Activated CD8-positive, alpha-beta T cell treated with anti-CD3 and anti-CD28 coated beads for 36 hours (primary cell): ENCODE measurements at regions of chr1 and their contacts with region 1.

Region 1: GRCh38 chr1:67332653-67333529 is 25.2 kb downstream of the IL12RB2 start:
- DNase-seq: peak; percentile 64
- ATAC-seq: peak; percentile 86
- H3K4me3 Mint-ChIP-seq: peak overlapping the region; percentile 28
- H3K27ac Mint-ChIP-seq: peak overlapping the region; percentile 95
- H3K4me1 Mint-ChIP-seq: peaks cover 72% of the 10 kb centered on the region
- H3K27me3 Mint-ChIP-seq: no peaks in the 10 kb centered on the region
- CTCF ChIP-seq: no peak

Region 2: DNA sequence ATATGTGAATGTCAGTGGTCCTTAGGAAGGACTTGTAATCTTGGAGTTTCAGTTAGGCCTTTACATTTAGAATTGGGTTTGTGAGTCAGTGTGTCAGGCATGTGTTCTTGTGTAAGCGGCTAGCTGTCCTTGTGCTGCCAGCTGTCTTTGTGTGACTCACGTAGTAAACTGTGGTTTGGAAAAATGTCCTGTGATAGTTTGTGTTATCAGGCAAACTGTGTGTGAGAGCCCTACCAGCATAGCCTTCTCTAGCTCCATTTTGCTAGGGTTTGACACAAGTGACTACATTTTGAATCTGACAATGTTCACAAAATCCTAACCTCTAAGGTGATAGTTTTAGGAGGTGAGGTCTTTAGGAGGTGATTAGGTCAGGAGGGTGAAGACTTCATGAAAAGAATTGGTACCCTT is 272.1 kb before region 1 on chr1:
- CTCF ChIA-PET with region 1: no interaction called
- POLR2A ChIA-PET with region 1: no interaction called
- intact Hi-C with region 1: no loop called
- DNase-seq: no peak
- ATAC-seq: no peak
- H3K4me3 Mint-ChIP-seq: no peak overlapping the region
- H3K27ac Mint-ChIP-seq: no peak overlapping the region
- H3K4me1 Mint-ChIP-seq: no peaks in the 10 kb centered on the region
- H3K27me3 Mint-ChIP-seq: peaks cover 8% of the 10 kb centered on the region
- CTCF ChIP-seq: no peak

Region 3: DNA sequence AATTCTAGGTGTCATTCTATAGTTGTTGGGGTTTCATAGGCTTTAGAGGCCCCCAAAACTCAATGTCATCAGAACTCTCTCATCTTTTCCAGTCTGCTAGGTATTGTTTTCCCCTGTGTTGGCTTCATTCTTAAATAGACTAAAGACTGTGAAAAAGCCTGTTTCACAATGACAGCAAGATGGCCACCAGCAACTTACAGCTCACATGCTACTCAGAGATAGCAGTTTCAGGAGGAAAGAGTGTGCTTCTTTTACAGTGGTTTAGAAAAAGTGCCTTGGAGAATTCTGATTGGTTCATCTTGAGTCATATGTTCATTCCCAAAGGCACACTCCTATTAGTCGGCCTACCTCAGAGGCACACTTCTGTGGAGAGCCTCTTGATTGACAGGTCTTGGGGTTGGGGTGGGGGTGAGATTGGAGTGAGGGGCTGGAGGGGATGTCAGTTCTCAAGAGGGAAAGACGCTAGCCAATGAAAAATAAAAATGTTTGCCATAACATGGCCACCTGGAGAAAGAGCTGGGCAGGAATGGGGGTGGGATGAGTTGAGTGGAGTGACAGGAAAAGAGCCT is 158.1 kb before region 1 on chr1:
- CTCF ChIA-PET with region 1: interaction called, 3 read pairs
- POLR2A ChIA-PET with region 1: interaction called, 3 read pairs
- intact Hi-C with region 1: loop called (anchors 2 kb)
- DNase-seq: peak; percentile 54
- ATAC-seq: peak; percentile 66
- H3K4me3 Mint-ChIP-seq: no peak overlapping the region
- H3K27ac Mint-ChIP-seq: peak overlapping the region; percentile 77
- H3K4me1 Mint-ChIP-seq: peaks cover 56% of the 10 kb centered on the region
- H3K27me3 Mint-ChIP-seq: peaks cover under 1% of the 10 kb centered on the region
- CTCF ChIP-seq: no peak

Region 4: GRCh38 chr1:67274623-67275325 is 58.1 kb before region 1 on chr1:
- CTCF ChIA-PET with region 1: interaction called, 4 read pairs
- POLR2A ChIA-PET with region 1: interaction called, 29 read pairs
- intact Hi-C with region 1: loop called (anchors 2 kb)
- DNase-seq: peak; percentile 47
- ATAC-seq: peak; percentile 91
- H3K4me3 Mint-ChIP-seq: no peak overlapping the region
- H3K27ac Mint-ChIP-seq: peak overlapping the region; percentile 79
- H3K4me1 Mint-ChIP-seq: peaks cover 41% of the 10 kb centered on the region
- H3K27me3 Mint-ChIP-seq: peaks cover 3% of the 10 kb centered on the region
- CTCF ChIP-seq: no peak

Region 5: GRCh38 chr1:67285780-67286488 is 47.0 kb before region 1 on chr1:
- CTCF ChIA-PET with region 1: interaction called, 4 read pairs
- POLR2A ChIA-PET with region 1: interaction called, 6 read pairs
- intact Hi-C with region 1: loop called (anchors 5 kb)
- DNase-seq: peak; percentile 57
- ATAC-seq: peak; percentile 96
- H3K4me3 Mint-ChIP-seq: no peak overlapping the region
- H3K27ac Mint-ChIP-seq: peak overlapping the region; percentile 88
- H3K4me1 Mint-ChIP-seq: peaks cover 37% of the 10 kb centered on the region
- H3K27me3 Mint-ChIP-seq: peaks cover 4% of the 10 kb centered on the region
- CTCF ChIP-seq: no peak

Region 6: DNA sequence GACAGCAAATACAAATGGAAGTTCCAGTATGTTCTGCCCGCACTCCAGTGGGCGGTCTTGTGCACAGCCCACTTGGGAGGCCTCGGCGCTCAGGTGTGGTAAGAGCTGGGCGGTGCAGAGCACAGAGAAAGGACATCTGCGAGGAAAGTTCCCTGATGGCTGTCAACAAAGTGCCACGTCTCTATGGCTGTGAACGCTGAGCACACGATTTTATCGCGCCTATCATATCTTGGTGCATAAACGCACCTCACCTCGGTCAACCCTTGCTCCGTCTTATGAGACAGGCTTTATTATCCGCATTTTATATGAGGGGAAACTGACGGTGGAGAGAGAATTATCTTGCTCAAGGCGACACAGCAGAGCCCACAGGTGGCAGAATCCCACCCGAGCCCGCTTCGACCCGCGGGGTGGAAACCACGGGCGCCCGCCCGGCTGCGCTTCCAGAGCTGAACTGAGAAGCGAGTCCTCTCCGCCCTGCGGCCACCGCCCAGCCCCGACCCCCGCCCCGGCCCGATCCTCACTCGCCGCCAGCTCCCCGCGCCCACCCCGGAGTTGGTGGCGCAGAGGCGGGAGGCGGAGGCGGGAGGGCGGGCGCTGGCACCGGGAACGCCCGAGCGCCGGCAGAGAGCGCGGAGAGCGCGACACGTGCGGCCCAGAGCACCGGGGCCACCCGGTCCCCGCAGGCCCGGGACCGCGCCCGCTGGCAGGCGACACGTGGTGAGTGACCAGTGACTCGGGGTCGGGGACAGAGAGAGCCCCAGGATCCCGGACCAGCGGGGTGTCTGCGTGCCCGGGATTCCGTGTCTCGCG is 25.4 kb before region 1 on chr1 and contains the start of gene IL12RB2:
- CTCF ChIA-PET with region 1: no interaction called
- POLR2A ChIA-PET with region 1: interaction called, 5 read pairs
- intact Hi-C with region 1: loop called (anchors 1 kb)
- DNase-seq: peak; percentile 77
- ATAC-seq: peak; percentile 77
- H3K4me3 Mint-ChIP-seq: peak within 1 kb of the TSS; percentile 84
- H3K27ac Mint-ChIP-seq: peak within 1 kb of the TSS; percentile 93
- H3K4me1 Mint-ChIP-seq: peaks cover 50% of the 10 kb centered on the region
- H3K27me3 Mint-ChIP-seq: peaks cover 11% of the 10 kb centered on the region
- CTCF ChIP-seq: no peak
- total RNA-seq, gene IL12RB2: 29.1 to 29.7 TPM

Region 7: GRCh38 chr1:67314696-67315095 is 18.2 kb before region 1 on chr1:
- CTCF ChIA-PET with region 1: interaction called, 5 read pairs
- POLR2A ChIA-PET with region 1: interaction called, 17 read pairs
- intact Hi-C with region 1: no loop called
- DNase-seq: no peak
- ATAC-seq: peak; percentile 77
- H3K4me3 Mint-ChIP-seq: no peak overlapping the region
- H3K27ac Mint-ChIP-seq: peak overlapping the region; percentile 62
- H3K4me1 Mint-ChIP-seq: peaks cover 47% of the 10 kb centered on the region
- H3K27me3 Mint-ChIP-seq: peaks cover under 1% of the 10 kb centered on the region
- CTCF ChIP-seq: no peak